ENCODE measurements at regions of chr11 and their contacts with region 1.

Region 1: GRCh38 chr11:85595285-85595884 is 31.8 kb downstream of the DLG2 start:
- DNase-seq: no peak
- H3K4me3 Mint-ChIP-seq: no peak overlapping the region
- H3K27ac Mint-ChIP-seq: no peak overlapping the region
- H3K4me1 Mint-ChIP-seq: no peaks in the 10 kb centered on the region
- H3K27me3 Mint-ChIP-seq: peaks cover 6% of the 10 kb centered on the region

Region 2: DNA sequence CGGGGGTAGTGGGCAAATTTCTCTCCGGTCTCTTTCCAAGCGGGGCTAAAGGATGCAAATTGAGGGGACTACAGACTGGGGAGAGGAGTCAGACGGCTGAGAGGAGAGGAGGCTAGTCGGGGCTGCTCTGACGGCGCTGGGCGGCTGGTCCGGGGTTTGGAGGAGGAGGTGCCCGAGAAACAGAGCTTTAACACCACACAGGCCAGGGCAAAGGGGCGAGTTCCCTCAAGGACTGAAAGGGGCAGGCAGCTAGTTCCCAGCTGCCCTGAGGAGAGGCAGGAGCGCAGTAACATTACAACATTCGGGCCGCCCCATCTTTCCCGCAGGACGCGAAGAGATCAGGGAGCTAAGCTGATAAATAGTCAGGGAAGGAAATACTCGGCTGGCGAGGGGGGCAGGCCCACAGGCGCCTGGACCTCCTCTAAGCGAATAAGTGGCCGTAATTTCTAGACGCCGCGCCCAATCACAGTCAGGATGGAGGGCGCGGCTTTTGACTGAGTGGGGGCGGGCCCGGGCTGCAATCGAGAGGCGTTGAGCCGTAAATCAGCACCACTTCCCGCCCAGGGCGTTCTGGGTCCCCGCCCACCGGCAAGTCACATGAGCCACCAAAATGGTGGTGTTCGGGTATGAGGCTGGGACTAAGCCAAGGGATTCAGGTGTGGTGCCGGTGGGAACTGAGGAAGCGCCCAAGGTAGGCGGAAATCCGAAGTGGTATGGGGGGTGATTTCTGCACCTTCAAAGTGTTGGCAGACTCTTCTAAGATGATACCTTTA is 32.8 kb after region 1 on chr11 and contains the start of gene TMEM126B:
- intact Hi-C with region 1: loop called (anchors 1 kb)
- DNase-seq: peak; percentile 96
- H3K4me3 Mint-ChIP-seq: peak within 1 kb of the TSS; percentile 97
- H3K27ac Mint-ChIP-seq: peak within 1 kb of the TSS; percentile 94
- H3K4me1 Mint-ChIP-seq: peaks cover 52% of the 10 kb centered on the region
- H3K27me3 Mint-ChIP-seq: peaks cover 6% of the 10 kb centered on the region
- total RNA-seq, gene TMEM126B: 52.5 and 57.2 TPM in 2 replicates

Region 3: DNA sequence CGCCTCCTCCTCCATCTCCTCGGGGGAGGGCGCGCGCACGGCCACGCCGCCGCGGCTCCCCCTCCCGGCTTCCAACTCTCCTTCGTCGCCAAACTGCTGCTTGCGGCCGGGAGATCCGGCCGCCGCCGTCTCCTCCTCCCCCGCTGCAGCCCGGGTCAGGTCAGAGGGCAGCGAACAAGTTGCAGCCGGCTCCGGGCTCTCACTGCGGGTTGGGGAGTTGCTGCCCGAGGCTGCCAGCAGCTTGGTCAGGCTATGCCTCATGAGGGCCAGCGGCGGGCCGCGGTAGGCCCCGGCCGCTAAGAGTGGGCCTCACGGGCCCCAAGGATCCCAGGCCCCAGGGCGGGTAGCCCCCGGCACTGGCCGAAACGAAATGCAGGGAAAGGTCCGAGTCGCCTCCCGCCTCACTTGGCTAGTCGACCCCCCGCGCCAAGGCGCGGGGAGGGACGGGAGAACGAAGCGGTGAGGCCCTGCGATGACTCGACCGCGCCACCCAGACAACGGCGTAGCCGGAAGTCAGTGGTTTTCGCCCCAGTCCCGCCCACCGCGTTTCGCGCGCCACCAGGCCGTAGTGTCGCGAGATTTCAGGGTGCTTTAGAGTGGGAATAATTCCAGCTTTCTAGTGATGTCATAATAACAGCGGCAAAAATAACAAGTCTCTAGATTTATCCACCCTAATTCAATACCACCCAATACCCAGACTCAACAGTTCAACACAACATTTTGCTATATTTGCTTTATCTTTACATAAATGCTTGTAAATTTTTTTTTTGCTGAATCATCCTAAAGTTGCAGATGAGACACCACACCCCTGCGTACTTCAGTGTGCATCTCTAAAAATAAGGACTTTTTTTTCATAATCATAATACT is 69.5 kb after region 1 on chr11 and contains the start of gene CREBZF:
- intact Hi-C with region 1: loop called (anchors 1 kb)
- DNase-seq: peak; percentile 94
- H3K4me3 Mint-ChIP-seq: peak within 1 kb of the TSS; percentile 99
- H3K27ac Mint-ChIP-seq: peak within 1 kb of the TSS; percentile 97
- H3K4me1 Mint-ChIP-seq: peaks cover 51% of the 10 kb centered on the region
- H3K27me3 Mint-ChIP-seq: no peaks in the 10 kb centered on the region
- total RNA-seq, gene CREBZF: 52.0 and 55.9 TPM in 2 replicates

Region 4: GRCh38 chr11:85988780-85989179 is 393.4 kb after region 1 on chr11:
- intact Hi-C with region 1: loop called (anchors 10 kb)
- DNase-seq: no peak
- H3K4me3 Mint-ChIP-seq: no peak overlapping the region
- H3K27ac Mint-ChIP-seq: peak overlapping the region; percentile 48
- H3K4me1 Mint-ChIP-seq: peaks cover 37% of the 10 kb centered on the region
- H3K27me3 Mint-ChIP-seq: no peaks in the 10 kb centered on the region

Region 5: GRCh38 chr11:86919557-86920210 is 1324.3 kb after region 1 on chr11:
- intact Hi-C with region 1: loop called (anchors 10 kb)
- DNase-seq: no peak
- H3K4me3 Mint-ChIP-seq: no peak overlapping the region
- H3K27ac Mint-ChIP-seq: no peak overlapping the region
- H3K4me1 Mint-ChIP-seq: peaks cover 6% of the 10 kb centered on the region
- H3K27me3 Mint-ChIP-seq: peaks cover 15% of the 10 kb centered on the region